ENCODE measurements at regions of chr2 and their contacts with region 1.

Region 1: GRCh38 chr2:62641410-62641843 is 64.1 kb upstream of the EHBP1 start:
- DNase-seq: no peak
- ATAC-seq: no peak
- H3K4me3 ChIP-seq: no peak overlapping the region; a peak in 1 of 6 replicates
- H3K27ac ChIP-seq: peak overlapping the region; percentile 50
- H3K4me1 ChIP-seq: peaks cover 42% of the 10 kb centered on the region
- H3K27me3 ChIP-seq: no peaks in the 10 kb centered on the region
- CTCF ChIP-seq: no peak
- EP300 ChIP-seq: peak in 1 of 2 experiments; percentile 46; a peak in 1 of 4 replicates
- POLR2A ChIP-seq: no peak
- RAD21 ChIP-seq: no peak

Region 2: DNA sequence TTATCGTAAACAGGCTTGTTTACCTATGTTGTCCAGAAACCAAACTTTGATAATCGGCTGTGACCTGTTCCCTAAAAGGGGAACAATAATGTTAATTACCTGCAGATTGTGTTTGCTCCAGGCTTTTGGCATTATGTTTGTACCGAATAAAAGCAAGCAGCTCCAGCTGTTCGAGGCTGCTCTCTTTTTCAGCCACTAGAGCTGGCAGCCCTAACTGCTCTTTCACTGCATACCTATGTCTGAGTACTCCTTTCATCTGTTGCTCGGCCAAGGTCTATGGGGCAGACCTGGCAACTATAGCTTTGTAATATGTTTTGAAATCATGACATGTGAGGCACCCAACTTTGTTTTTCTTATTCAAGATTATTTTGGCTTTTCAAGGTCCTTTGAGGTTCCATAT is 13.8 kb before region 1 on chr2:
- CTCF ChIA-PET with region 1: no interaction called
- POLR2A ChIA-PET with region 1: no interaction called
- in situ Hi-C with region 1: no loop called
- intact Hi-C with region 1: loop called (anchors 1 kb)
- DNase-seq: peak; percentile 66
- ATAC-seq: peak; percentile 97
- H3K4me3 ChIP-seq: no peak overlapping the region
- H3K27ac ChIP-seq: no peak overlapping the region
- H3K4me1 ChIP-seq: peaks cover 21% of the 10 kb centered on the region
- H3K27me3 ChIP-seq: no peaks in the 10 kb centered on the region
- CTCF ChIP-seq: 0 out of 2 replicates have a peak, but pooled peaks have one; percentile 5
- EP300 ChIP-seq: 0 out of 4 replicates have a peak, but pooled peaks of 1 of the 2 experiments have one; percentile 11
- POLR2A ChIP-seq: no peak
- RAD21 ChIP-seq: no peak

Region 3: DNA sequence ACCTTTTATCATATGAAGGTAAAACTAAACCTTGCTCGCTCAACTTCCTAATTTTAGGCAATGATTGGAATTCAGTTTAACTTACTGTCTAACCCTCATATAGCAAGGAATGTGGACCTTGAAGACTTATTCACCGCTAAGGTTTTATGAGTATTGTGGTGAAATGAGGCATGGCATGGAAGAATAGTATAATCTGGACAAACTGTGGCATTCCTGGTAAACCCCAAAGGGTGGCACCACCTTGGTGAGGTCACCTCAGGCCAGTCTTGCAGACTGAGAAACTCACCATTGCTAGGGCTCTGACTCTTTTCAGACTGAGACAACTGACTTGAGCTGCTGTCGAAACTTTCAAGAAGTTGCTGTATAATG is 13.0 kb after region 1 on chr2:
- CTCF ChIA-PET with region 1: no interaction called
- POLR2A ChIA-PET with region 1: interaction called, 10 read pairs
- in situ Hi-C with region 1: no loop called
- intact Hi-C with region 1: no loop called
- DNase-seq: no peak
- ATAC-seq: peak; percentile 71
- H3K4me3 ChIP-seq: no peak overlapping the region
- H3K27ac ChIP-seq: peak overlapping the region; percentile 66
- H3K4me1 ChIP-seq: peaks cover 30% of the 10 kb centered on the region
- H3K27me3 ChIP-seq: no peaks in the 10 kb centered on the region
- CTCF ChIP-seq: no peak
- EP300 ChIP-seq: no peak
- POLR2A ChIP-seq: no peak
- RAD21 ChIP-seq: no peak

Region 4: DNA sequence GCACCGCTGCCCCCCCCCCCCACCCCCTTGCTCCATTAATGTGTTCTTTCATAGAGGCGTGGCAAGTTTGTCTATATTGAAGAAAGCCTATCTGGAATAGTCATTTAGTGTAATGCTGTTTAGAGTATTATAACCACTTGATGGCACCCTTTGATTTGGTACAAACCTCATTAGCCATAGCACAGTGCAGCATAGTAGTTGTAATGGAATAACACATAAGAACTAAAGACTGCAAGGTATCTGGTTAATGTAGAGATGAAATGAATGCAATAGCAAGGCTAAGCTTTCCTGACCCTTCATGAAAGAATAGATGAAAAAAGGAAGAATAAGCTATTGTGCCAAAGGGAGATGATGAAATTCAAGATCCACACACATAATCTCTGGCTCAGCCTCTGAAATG is 146.0 kb after region 1 on chr2:
- CTCF ChIA-PET with region 1: no interaction called
- POLR2A ChIA-PET with region 1: no interaction called
- in situ Hi-C with region 1: no loop called
- intact Hi-C with region 1: no loop called
- DNase-seq: no peak
- ATAC-seq: peak; percentile 31; the same call in 2 of the 3 replicates
- H3K4me3 ChIP-seq: no peak overlapping the region
- H3K27ac ChIP-seq: no peak overlapping the region
- H3K4me1 ChIP-seq: peaks cover 53% of the 10 kb centered on the region
- H3K27me3 ChIP-seq: no peaks in the 10 kb centered on the region
- CTCF ChIP-seq: peak; percentile 53
- EP300 ChIP-seq: no peak
- POLR2A ChIP-seq: no peak
- RAD21 ChIP-seq: no peak

Region 5: DNA sequence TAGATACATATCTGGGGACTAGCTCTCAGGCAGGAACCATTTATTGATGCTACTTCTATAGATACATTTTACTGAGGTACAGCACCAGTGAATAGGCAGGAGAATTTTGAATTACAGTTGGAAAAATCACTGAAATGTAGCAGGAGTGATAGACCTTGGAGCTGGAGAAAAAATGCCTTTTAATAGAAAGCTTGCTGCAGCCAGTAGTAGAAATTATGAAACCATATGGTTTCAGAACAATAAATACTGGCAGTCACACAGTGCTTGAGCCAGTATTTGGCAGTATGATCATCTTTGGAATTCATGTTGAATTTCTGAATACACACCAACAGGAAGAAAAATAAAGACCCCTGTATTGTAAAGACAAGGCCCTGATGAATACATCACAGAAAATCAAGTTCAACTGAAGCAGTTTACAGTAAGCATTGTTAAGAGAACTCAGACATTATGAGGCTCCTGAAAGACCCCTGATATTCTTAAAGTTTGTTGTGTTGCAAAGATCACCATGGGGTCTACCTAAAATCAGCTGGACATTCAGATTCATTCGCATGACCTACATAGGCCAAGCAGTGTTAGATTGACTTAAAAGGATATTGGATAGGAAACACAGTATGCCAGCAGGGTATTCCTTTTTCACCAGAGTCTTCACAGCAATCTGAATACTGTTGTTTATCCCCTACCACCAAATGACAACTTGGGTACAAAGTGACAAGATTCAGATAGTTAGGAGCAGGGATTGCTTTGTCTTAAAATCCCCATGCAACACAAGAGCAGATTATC is 203.1 kb after region 1 on chr2:
- CTCF ChIA-PET with region 1: no interaction called
- POLR2A ChIA-PET with region 1: no interaction called
- in situ Hi-C with region 1: no loop called
- intact Hi-C with region 1: no loop called
- DNase-seq: no peak
- ATAC-seq: peak; percentile 45
- H3K4me3 ChIP-seq: no peak overlapping the region
- H3K27ac ChIP-seq: no peak overlapping the region
- H3K4me1 ChIP-seq: no peaks in the 10 kb centered on the region
- H3K27me3 ChIP-seq: no peaks in the 10 kb centered on the region
- CTCF ChIP-seq: no peak
- EP300 ChIP-seq: no peak
- POLR2A ChIP-seq: no peak
- RAD21 ChIP-seq: no peak

Measured in HepG2 (cell line).